GM23248 (cell line): ENCODE measurements at regions of chr18 and their contacts with region 1.

Region 1: GRCh38 chr18:46481048-46481846 is 175.8 kb downstream of the LOXHD1 start:
- DNase-seq: peak; percentile 51
- H3K4me3 ChIP-seq: no peak overlapping the region
- H3K27ac ChIP-seq: no peak overlapping the region
- H3K4me1 ChIP-seq: no peaks in the 10 kb centered on the region
- H3K27me3 ChIP-seq: peaks cover 3% of the 10 kb centered on the region; the same call in 1 of the 2 replicates

Region 2: DNA sequence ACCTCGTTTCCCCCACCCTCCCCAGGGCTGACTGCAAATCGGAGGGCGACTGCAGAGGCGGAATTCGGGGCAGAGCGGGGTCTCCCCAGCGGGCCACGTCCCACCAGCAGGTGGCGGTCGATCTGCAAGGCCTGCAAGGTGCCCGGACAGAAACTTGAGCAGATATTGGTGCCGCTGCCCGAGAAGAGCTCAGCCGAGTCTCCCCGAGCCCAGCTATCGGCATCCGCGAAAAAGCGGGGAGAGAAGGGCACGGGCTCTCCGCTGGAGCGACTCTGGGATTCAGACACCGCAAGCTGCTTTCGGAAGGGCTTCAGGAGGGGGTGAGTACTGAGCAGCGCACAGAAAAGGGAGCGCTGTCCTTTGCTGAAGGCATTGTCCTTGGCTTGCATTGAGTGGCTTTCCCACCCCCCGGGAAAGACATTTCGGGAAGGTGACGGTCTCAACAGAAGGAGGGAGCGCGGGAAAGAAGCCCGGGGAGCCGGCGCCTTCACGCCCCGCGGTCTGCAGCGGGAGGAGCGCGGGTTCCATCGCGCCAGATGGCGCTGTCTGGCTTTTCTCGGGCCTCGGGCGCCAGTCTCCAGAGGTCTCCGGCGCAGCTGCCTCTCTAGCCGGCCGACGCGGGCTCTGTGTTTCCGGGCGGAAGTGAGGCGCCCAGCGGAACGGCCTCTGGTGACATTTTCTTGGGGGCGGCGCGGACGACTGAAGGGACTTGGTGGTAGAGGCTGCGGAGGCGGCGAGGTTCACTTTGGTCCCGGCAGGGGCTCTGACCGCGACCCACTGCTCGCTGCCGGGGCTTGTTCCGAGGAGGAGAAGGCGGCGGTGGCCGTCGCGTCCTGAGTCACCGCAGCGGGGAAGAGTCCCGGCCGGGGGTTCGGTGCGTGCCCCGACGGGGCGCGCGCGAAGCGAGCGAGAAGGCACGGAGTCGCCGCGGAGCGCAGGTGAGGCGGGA is 307.6 kb before region 1 on chr18:
- in situ Hi-C with region 1: loop called (anchors 25 kb)
- DNase-seq: peak; percentile 98
- H3K4me3 ChIP-seq: peak overlapping the region; percentile 78
- H3K27ac ChIP-seq: peak overlapping the region; percentile 56
- H3K4me1 ChIP-seq: peaks cover 23% of the 10 kb centered on the region
- H3K27me3 ChIP-seq: no peaks in the 10 kb centered on the region